ENCODE measurements at regions of chr20 and their contacts with region 1.

Region 1: GRCh38 chr20:330233-331149 is 5.1 kb downstream of the SOX12 start:
- DNase-seq: peak; percentile 81
- ATAC-seq: peak; percentile 42
- H3K4me3 ChIP-seq: no peak overlapping the region
- H3K4me3 Mint-ChIP-seq: no peak overlapping the region
- H3K27ac ChIP-seq: no peak overlapping the region
- H3K27ac Mint-ChIP-seq: peak overlapping the region; percentile 12
- H3K4me1 ChIP-seq: peaks cover 22 to 35% of the 10 kb centered on the region in 2 donors
- H3K4me1 Mint-ChIP-seq: peaks cover 31% of the 10 kb centered on the region
- H3K27me3 ChIP-seq: no peaks in the 10 kb centered on the region
- H3K27me3 Mint-ChIP-seq: no peaks in the 10 kb centered on the region
- CTCF ChIP-seq: peak; percentile 91

Region 2: GRCh38 chr20:208942-209566 is 121.4 kb before region 1 on chr20:
- CTCF ChIA-PET with region 1: interaction called, 27 read pairs
- POLR2A ChIA-PET with region 1: no interaction called
- intact Hi-C with region 1: loop called (anchors 1 kb)
- DNase-seq: peak; percentile 66
- ATAC-seq: peak; percentile 56
- H3K4me3 ChIP-seq: no peak overlapping the region
- H3K4me3 Mint-ChIP-seq: no peak overlapping the region
- H3K27ac ChIP-seq: no peak overlapping the region
- H3K27ac Mint-ChIP-seq: no peak overlapping the region
- H3K4me1 ChIP-seq: no peaks in the 10 kb centered on the region
- H3K4me1 Mint-ChIP-seq: no peaks in the 10 kb centered on the region
- H3K27me3 ChIP-seq: no peaks in the 10 kb centered on the region
- H3K27me3 Mint-ChIP-seq: peaks cover 22% of the 10 kb centered on the region
- CTCF ChIP-seq: peak; percentile 74

Region 3: GRCh38 chr20:258963-259362 is 71.5 kb before region 1 on chr20:
- CTCF ChIA-PET with region 1: interaction called, 89 read pairs
- POLR2A ChIA-PET with region 1: no interaction called
- intact Hi-C with region 1: loop called (anchors 2 kb)
- DNase-seq: no peak
- ATAC-seq: no peak
- H3K4me3 ChIP-seq: no peak overlapping the region
- H3K4me3 Mint-ChIP-seq: no peak overlapping the region
- H3K27ac ChIP-seq: no peak overlapping the region
- H3K27ac Mint-ChIP-seq: no peak overlapping the region
- H3K4me1 ChIP-seq: no peaks in the 10 kb centered on the region
- H3K4me1 Mint-ChIP-seq: no peaks in the 10 kb centered on the region
- H3K27me3 ChIP-seq: peaks cover 0 to 5% (median 2%) of the 10 kb centered on the region in 4 experiments
- H3K27me3 Mint-ChIP-seq: peaks cover 24% of the 10 kb centered on the region
- CTCF ChIP-seq: no peak

Region 4: GRCh38 chr20:266596-267562 is 63.6 kb before region 1 on chr20:
- CTCF ChIA-PET with region 1: interaction called, 89 read pairs
- POLR2A ChIA-PET with region 1: no interaction called
- intact Hi-C with region 1: loop called (anchors 1 kb)
- DNase-seq: peak; percentile 91
- ATAC-seq: peak; percentile 100
- H3K4me3 ChIP-seq: peak overlapping the region; percentile 33 to 63 (median 54)
- H3K4me3 Mint-ChIP-seq: peak overlapping the region; percentile 85
- H3K27ac ChIP-seq: no peak overlapping the region
- H3K27ac Mint-ChIP-seq: no peak overlapping the region
- H3K4me1 ChIP-seq: peaks cover 3 to 8% of the 10 kb centered on the region in 2 donors
- H3K4me1 Mint-ChIP-seq: peaks cover 9% of the 10 kb centered on the region
- H3K27me3 ChIP-seq: peaks cover 0 to 2% (median 1%) of the 10 kb centered on the region in 4 experiments
- H3K27me3 Mint-ChIP-seq: peaks cover 9% of the 10 kb centered on the region
- CTCF ChIP-seq: peak; percentile 95

Region 5: DNA sequence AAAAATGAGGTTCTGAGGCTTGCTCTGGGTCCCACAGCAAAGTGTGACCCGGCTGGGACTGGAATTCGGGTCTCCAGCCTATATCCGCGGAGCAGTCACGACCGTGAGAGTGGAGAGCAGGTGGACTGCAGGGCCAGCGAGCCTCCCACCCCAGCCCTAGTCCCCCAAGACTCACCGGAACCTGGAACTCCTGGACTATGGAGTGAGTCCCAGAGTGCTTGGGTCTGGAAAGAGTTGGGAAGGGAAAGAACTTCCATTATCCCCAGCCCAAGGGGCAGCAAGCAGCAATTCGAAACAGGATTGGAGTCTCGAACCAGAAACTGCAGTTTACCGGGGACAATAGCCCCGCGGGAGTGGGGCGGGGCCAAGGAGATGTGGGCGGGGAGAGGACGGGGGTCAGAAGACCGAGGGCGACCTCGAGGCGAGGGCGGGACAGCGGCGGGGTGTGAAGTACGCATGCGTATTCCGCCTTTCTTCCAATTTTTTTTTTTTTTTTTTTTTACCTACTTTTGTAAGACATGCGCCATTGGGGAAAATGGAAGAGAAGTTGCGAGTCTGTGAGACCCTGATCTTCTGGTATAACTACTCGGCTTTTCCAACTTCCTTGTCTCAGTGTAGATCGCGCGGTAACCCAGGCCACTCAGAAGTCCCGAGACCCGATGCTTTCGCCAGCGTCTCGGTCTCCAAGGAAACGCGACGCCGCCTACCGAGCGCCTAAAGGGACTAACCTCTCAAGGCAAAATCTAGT is 40.2 kb before region 1 on chr20 and contains the start of gene C20orf96:
- CTCF ChIA-PET with region 1: interaction called, 20 read pairs
- POLR2A ChIA-PET with region 1: no interaction called
- intact Hi-C with region 1: loop called (anchors 1 kb)
- DNase-seq: peak; percentile 93
- ATAC-seq: peak; percentile 98
- H3K4me3 ChIP-seq: peak within 1 kb of the TSS; percentile 48 to 83 (median 69)
- H3K4me3 Mint-ChIP-seq: no peak within 1 kb of the TSS
- H3K27ac ChIP-seq: peak within 1 kb of the TSS in 1 of 2 donors; percentile 57
- H3K27ac Mint-ChIP-seq: no peak within 1 kb of the TSS
- H3K4me1 ChIP-seq: peaks cover 18 to 22% of the 10 kb centered on the region in 2 donors
- H3K4me1 Mint-ChIP-seq: peaks cover 6% of the 10 kb centered on the region
- H3K27me3 ChIP-seq: no peaks in the 10 kb centered on the region
- H3K27me3 Mint-ChIP-seq: no peaks in the 10 kb centered on the region
- CTCF ChIP-seq: peak; percentile 45
- total RNA-seq, gene C20orf96: 7.5 TPM in 2 replicates

Region 6: DNA sequence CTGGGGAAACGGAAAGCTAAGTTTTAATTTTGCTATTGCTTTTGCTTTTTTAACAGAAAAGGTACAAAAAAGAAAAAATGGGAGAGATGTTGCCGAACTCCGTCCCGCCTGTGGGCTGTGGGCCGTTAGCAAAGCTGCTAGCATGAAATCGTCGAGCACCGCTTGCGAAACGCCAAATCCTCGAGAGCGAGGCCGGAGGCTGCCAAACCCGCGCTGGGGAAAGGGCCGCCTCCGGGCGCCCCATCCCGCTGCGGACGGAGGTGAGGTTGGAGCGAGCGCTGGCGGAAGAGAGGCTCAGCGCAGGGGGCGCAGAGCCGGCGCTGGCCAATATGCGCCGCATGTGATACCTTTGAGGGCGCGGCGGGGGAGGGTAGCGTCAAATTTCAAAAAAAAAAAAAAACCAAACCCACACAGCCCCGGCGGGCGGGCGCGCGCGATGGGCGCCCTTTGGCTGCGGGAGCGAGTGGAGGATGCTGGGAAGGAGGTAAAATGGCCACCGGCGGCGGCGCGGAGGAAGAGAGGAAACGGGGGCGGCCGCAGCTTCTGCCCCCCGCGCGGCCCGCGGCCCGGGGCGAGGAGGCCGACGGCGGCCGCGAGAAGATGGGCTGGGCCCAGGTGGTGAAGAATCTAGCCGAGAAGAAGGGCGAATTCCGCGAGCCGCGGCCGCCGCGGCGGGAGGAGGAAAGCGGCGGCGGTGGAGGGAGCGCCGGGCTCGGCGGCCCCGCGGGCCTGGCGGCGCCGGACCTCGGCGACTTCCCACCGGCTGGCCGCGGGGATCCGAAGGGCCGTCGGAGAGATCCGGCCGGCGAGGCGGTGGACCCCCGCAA is 33.2 kb before region 1 on chr20 and contains the start of gene ZCCHC3:
- CTCF ChIA-PET with region 1: interaction called, 58 read pairs
- POLR2A ChIA-PET with region 1: interaction called, 35 read pairs
- intact Hi-C with region 1: loop called (anchors 1 kb)
- DNase-seq: peak; percentile 94
- ATAC-seq: peak; percentile 86
- H3K4me3 ChIP-seq: peak within 1 kb of the TSS; percentile 84 to 94 (median 90)
- H3K4me3 Mint-ChIP-seq: peak within 1 kb of the TSS; percentile 99
- H3K27ac ChIP-seq: peak within 1 kb of the TSS; percentile 85 to 88
- H3K27ac Mint-ChIP-seq: peak within 1 kb of the TSS; percentile 100
- H3K4me1 ChIP-seq: peaks cover 16 to 27% of the 10 kb centered on the region in 2 donors
- H3K4me1 Mint-ChIP-seq: peaks cover 40% of the 10 kb centered on the region
- H3K27me3 ChIP-seq: no peaks in the 10 kb centered on the region
- H3K27me3 Mint-ChIP-seq: no peaks in the 10 kb centered on the region
- CTCF ChIP-seq: peak; percentile 19
- total RNA-seq, gene ZCCHC3: 34.5 and 35.7 TPM in 2 replicates

Region 7: DNA sequence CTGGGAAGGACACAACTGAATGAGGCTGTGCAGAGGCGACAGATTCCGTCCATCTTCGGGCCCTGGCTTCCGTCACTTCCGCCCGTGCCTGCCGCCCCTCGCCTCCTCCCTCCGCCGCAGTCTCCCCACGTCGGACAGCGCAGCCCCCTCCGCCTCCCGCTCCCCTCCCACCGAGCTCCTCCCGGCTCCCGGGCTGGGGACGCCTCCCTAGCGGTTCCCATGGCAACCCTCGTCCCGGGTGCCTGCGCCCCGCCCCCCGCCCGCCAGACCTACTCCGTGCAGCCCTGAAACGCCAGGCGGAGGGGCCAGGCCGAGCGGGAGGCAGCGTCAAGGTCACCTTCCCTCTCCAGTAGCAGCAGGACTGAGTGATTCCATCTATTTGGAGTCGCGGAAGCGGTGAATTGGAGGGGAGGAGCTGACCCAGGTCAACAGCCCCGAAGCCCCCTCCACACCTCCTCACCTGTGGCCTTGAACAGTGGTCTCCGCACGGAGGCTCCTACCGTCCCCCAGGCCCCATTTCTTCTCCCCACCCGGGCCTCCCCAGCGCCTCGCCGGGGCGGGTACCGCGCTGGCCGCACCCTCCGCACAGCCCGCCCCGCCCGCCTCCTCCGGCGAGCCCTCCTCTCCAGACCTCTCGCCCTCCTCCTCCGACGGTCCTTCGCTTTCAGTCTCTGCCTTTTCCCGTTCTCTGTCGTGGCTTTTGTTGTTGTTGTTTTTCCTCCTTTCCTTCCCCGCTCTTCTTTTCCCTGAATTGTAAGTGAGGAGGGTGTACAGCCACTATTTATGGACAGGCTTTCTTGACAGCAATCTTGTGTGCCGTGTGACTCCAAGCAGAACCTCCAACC is 17.4 kb after region 1 on chr20:
- CTCF ChIA-PET with region 1: interaction called, 47 read pairs
- POLR2A ChIA-PET with region 1: no interaction called
- intact Hi-C with region 1: loop called (anchors 1 kb)
- DNase-seq: peak; percentile 78
- ATAC-seq: peak; percentile 84
- H3K4me3 ChIP-seq: peak overlapping the region; percentile 27 to 92 (median 79)
- H3K4me3 Mint-ChIP-seq: peak overlapping the region; percentile 97
- H3K27ac ChIP-seq: peak overlapping the region; percentile 58 to 74
- H3K27ac Mint-ChIP-seq: peak overlapping the region; percentile 92
- H3K4me1 ChIP-seq: peaks cover 10 to 19% of the 10 kb centered on the region in 2 donors
- H3K4me1 Mint-ChIP-seq: peaks cover 13% of the 10 kb centered on the region
- H3K27me3 ChIP-seq: no peaks in the 10 kb centered on the region
- H3K27me3 Mint-ChIP-seq: no peaks in the 10 kb centered on the region
- CTCF ChIP-seq: no peak

Region 8: GRCh38 chr20:415820-416322 is 85.4 kb after region 1 on chr20:
- CTCF ChIA-PET with region 1: no interaction called
- POLR2A ChIA-PET with region 1: no interaction called
- intact Hi-C with region 1: no loop called
- DNase-seq: no peak
- ATAC-seq: no peak
- H3K4me3 ChIP-seq: no peak overlapping the region
- H3K4me3 Mint-ChIP-seq: no peak overlapping the region
- H3K27ac ChIP-seq: no peak overlapping the region
- H3K27ac Mint-ChIP-seq: no peak overlapping the region
- H3K4me1 ChIP-seq: peaks cover 0 to 4% of the 10 kb centered on the region in 2 donors
- H3K4me1 Mint-ChIP-seq: peaks cover 19% of the 10 kb centered on the region
- H3K27me3 ChIP-seq: no peaks in the 10 kb centered on the region
- H3K27me3 Mint-ChIP-seq: no peaks in the 10 kb centered on the region
- CTCF ChIP-seq: no peak

Region 9: GRCh38 chr20:555933-556526 is 225.5 kb after region 1 on chr20:
- CTCF ChIA-PET with region 1: no interaction called
- POLR2A ChIA-PET with region 1: no interaction called
- intact Hi-C with region 1: no loop called
- DNase-seq: no peak
- ATAC-seq: no peak
- H3K4me3 ChIP-seq: no peak overlapping the region
- H3K4me3 Mint-ChIP-seq: no peak overlapping the region
- H3K27ac ChIP-seq: no peak overlapping the region
- H3K27ac Mint-ChIP-seq: no peak overlapping the region
- H3K4me1 ChIP-seq: no peaks in the 10 kb centered on the region
- H3K4me1 Mint-ChIP-seq: no peaks in the 10 kb centered on the region
- H3K27me3 ChIP-seq: peaks cover 0 to 24% (median 16%) of the 10 kb centered on the region in 4 experiments
- H3K27me3 Mint-ChIP-seq: peaks cover 42% of the 10 kb centered on the region
- CTCF ChIP-seq: no peak

Measured in B cell (primary cell).